PC-9 (cell line): ENCODE measurements at regions of chr10 and their contacts with region 1.

Region 1: GRCh38 chr10:115278294-115278693 is 185.1 kb downstream of the ATRNL1 start:
- DNase-seq: no peak
- H3K4me3 ChIP-seq: no peak overlapping the region
- H3K27ac ChIP-seq: no peak overlapping the region
- H3K4me1 ChIP-seq: no peaks in the 10 kb centered on the region
- H3K27me3 ChIP-seq: no peaks in the 10 kb centered on the region
- CTCF ChIP-seq: no peak

Region 2: GRCh38 chr10:115384665-115385064 is 106.4 kb after region 1 on chr10:
- CTCF ChIA-PET with region 1: no interaction called
- POLR2A ChIA-PET with region 1: no interaction called
- intact Hi-C with region 1: no loop called
- DNase-seq: no peak
- H3K4me3 ChIP-seq: no peak overlapping the region
- H3K27ac ChIP-seq: no peak overlapping the region
- H3K4me1 ChIP-seq: no peaks in the 10 kb centered on the region
- H3K27me3 ChIP-seq: no peaks in the 10 kb centered on the region
- CTCF ChIP-seq: no peak

Region 3: GRCh38 chr10:116763440-116763839 is 1485.1 kb after region 1 on chr10:
- CTCF ChIA-PET with region 1: interaction called, 14 read pairs
- POLR2A ChIA-PET with region 1: no interaction called
- intact Hi-C with region 1: no loop called
- DNase-seq: no peak
- H3K4me3 ChIP-seq: no peak overlapping the region
- H3K27ac ChIP-seq: no peak overlapping the region
- H3K4me1 ChIP-seq: peaks cover 20% of the 10 kb centered on the region
- H3K27me3 ChIP-seq: no peaks in the 10 kb centered on the region
- CTCF ChIP-seq: no peak